CD4-positive, alpha-beta memory T cell (primary cell): ENCODE measurements at regions of chr18 and their contacts with region 1.

Region 1: GRCh38 chr18:70195852-70196434 is 9.5 kb downstream of the RTTN start:
- DNase-seq: peak in 3 of 5 donors; percentile 7 to 22 (median 16)
- H3K4me3 ChIP-seq: no peak overlapping the region
- H3K4me3 Mint-ChIP-seq: no peak overlapping the region
- H3K27ac ChIP-seq: no peak overlapping the region
- H3K27ac Mint-ChIP-seq: no peak overlapping the region
- H3K4me1 ChIP-seq: no peaks in the 10 kb centered on the region
- H3K4me1 Mint-ChIP-seq: peaks cover 1 to 7% (median 5%) of the 10 kb centered on the region in 4 donors
- H3K27me3 ChIP-seq: no peaks in the 10 kb centered on the region
- H3K27me3 Mint-ChIP-seq: no peaks in the 10 kb centered on the region

Region 2: DNA sequence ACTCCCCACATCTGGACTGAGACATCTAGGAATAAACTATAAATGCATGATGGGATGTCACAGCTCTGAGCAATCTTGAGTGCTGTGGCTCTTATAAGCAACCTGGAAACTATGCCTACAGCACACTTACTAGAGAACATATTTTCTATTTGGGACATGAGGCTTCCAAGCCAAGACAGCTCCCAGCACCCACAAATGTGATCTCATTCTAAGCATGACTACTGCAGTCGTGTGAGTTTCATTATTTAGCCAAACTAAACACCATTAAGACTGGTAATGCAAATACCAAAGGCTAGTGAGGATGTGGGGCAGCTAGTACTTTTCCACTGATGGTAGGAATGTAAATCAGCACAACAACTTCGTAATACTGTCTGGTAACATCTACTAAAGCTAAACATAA is 62.9 kb before region 1 on chr18:
- CTCF ChIA-PET with region 1: no interaction called
- POLR2A ChIA-PET with region 1: no interaction called
- intact Hi-C with region 1: loop called (anchors 10 kb)
- DNase-seq: no peak
- H3K4me3 ChIP-seq: no peak overlapping the region
- H3K4me3 Mint-ChIP-seq: no peak overlapping the region
- H3K27ac ChIP-seq: no peak overlapping the region
- H3K27ac Mint-ChIP-seq: peak overlapping the region in 1 of 7 donors; percentile 59
- H3K4me1 ChIP-seq: no peaks in the 10 kb centered on the region
- H3K4me1 Mint-ChIP-seq: peaks cover 0 to 2% (median under 1%) of the 10 kb centered on the region in 4 donors
- H3K27me3 ChIP-seq: no peaks in the 10 kb centered on the region
- H3K27me3 Mint-ChIP-seq: no peaks in the 10 kb centered on the region

Region 3: GRCh38 chr18:70183441-70183840 is 12.5 kb before region 1 on chr18:
- CTCF ChIA-PET with region 1: interaction called, 14 read pairs
- POLR2A ChIA-PET with region 1: no interaction called
- intact Hi-C with region 1: no loop called
- DNase-seq: no peak
- H3K4me3 ChIP-seq: no peak overlapping the region
- H3K4me3 Mint-ChIP-seq: no peak overlapping the region
- H3K27ac ChIP-seq: no peak overlapping the region
- H3K27ac Mint-ChIP-seq: no peak overlapping the region
- H3K4me1 ChIP-seq: peaks cover 6% of the 10 kb centered on the region
- H3K4me1 Mint-ChIP-seq: peaks cover 5 to 15% (median 12%) of the 10 kb centered on the region in 4 donors
- H3K27me3 ChIP-seq: no peaks in the 10 kb centered on the region
- H3K27me3 Mint-ChIP-seq: no peaks in the 10 kb centered on the region

Region 4: GRCh38 chr18:70432804-70433400 is 237.0 kb after region 1 on chr18:
- CTCF ChIA-PET with region 1: interaction called, 63 read pairs
- POLR2A ChIA-PET with region 1: no interaction called
- intact Hi-C with region 1: no loop called
- DNase-seq: no peak
- H3K4me3 ChIP-seq: no peak overlapping the region
- H3K4me3 Mint-ChIP-seq: no peak overlapping the region
- H3K27ac ChIP-seq: no peak overlapping the region
- H3K27ac Mint-ChIP-seq: no peak overlapping the region
- H3K4me1 ChIP-seq: no peaks in the 10 kb centered on the region
- H3K4me1 Mint-ChIP-seq: no peaks in the 10 kb centered on the region
- H3K27me3 ChIP-seq: no peaks in the 10 kb centered on the region
- H3K27me3 Mint-ChIP-seq: no peaks in the 10 kb centered on the region

Region 5: GRCh38 chr18:70454704-70455322 is 258.9 kb after region 1 on chr18:
- CTCF ChIA-PET with region 1: interaction called, 17 read pairs
- POLR2A ChIA-PET with region 1: no interaction called
- intact Hi-C with region 1: loop called (anchors 1 kb)
- DNase-seq: peak in 4 of 5 donors; percentile 20 to 39 (median 30)
- H3K4me3 ChIP-seq: no peak overlapping the region
- H3K4me3 Mint-ChIP-seq: no peak overlapping the region
- H3K27ac ChIP-seq: no peak overlapping the region
- H3K27ac Mint-ChIP-seq: no peak overlapping the region
- H3K4me1 ChIP-seq: no peaks in the 10 kb centered on the region
- H3K4me1 Mint-ChIP-seq: no peaks in the 10 kb centered on the region
- H3K27me3 ChIP-seq: no peaks in the 10 kb centered on the region
- H3K27me3 Mint-ChIP-seq: peaks cover 1 to 14% of the 10 kb centered on the region in 2 donors